ENCODE measurements at regions of chr18 and their contacts with region 1.

Region 1: DNA sequence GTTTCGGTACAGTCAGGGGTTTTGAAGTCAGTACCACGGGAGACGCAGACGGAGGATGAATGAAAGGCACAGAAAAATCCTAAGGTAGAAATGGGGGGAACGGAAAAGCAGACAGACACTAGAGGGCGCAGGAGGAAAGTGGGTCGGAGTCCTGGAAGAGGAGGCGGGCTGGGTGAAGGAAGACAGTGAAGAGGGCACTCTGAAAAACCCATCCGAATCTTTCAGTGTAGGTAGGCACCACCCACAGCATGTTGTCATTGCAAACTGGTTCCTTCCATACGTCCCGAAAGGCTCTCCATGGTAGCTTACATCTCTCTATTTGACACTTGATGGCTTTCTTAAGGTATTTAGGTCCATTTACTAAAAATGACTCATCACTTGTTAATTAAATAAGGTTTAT is 18.5 kb upstream of the ZNF236 start:
- DNase-seq: no peak
- ATAC-seq: peak; percentile 49

Region 2: GRCh38 chr18:76874642-76875389 is 71.0 kb after region 1 on chr18:
- intact Hi-C with region 1: loop called (anchors 5 kb)
- DNase-seq: no peak
- ATAC-seq: no peak

Region 3: GRCh38 chr18:76982841-76983587 is 179.2 kb after region 1 on chr18:
- intact Hi-C with region 1: loop called (anchors 2 kb)
- DNase-seq: peak; percentile 90
- ATAC-seq: peak; percentile 78

Region 4: DNA sequence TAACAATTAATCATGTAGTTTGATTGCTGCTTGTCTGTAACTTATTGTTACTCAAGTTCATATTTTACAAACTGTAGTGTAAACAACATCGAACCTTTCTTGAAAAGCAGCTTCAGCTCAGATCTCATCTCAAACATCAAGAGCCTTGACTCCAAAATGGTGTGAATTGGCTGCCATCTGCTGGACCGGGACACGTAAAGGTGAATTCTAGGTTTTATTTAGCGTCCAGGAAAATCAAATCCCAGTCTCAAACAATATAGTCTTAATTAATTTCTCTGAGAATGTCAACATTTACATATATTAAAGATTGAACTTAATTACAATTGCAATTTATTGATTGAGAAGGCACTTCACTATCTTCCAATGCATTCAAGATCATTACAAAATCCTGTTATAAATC is 898.9 kb after region 1 on chr18:
- intact Hi-C with region 1: loop called (anchors 5 kb)
- DNase-seq: no peak
- ATAC-seq: no peak

Measured in Right ventricle myocardium inferior (tissue), 1 donor.